Mammary epithelial cell (primary cell): ENCODE measurements at regions of chr2 and their contacts with region 1.

Region 1: DNA sequence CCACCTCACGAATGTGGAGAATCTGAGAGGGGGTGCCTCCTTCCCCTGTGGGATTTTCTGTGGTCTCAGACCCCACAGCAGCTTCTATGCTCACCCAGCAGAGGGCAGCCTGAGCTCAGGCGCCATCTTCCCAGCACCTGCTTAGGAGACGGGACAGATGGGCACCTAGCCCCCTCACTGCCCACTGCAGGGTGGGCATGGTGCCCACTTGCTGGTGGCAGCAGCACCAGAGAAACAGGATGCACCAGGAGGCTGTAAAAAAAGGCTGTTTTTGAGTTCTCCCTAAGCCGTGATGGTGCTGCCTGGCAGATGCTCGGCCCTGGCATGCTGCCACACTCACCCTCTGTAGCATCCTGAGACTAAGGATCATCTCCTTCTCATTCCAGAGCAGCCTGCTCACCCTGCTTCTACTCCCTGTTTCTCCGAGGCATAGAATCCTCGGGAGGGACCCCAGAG is 19.1 kb upstream of the SLC20A1 start:
- DNase-seq: no peak
- H3K4me3 ChIP-seq: peak overlapping the region in 2 of 3 experiments; percentile 28 to 33
- H3K27ac ChIP-seq: peak overlapping the region; percentile 98
- H3K4me1 ChIP-seq: peaks cover 93% of the 10 kb centered on the region
- H3K27me3 ChIP-seq: no peaks in the 10 kb centered on the region
- CTCF ChIP-seq: peak; percentile 78 to 95

Region 2: GRCh38 chr2:112109278-112109677 is 517.4 kb before region 1 on chr2:
- CTCF ChIA-PET with region 1: interaction called, 12 read pairs
- dilution Hi-C with region 1: no loop called
- in situ Hi-C with region 1: no loop called
- intact Hi-C with region 1: no loop called
- DNase-seq: no peak
- H3K4me3 ChIP-seq: no peak overlapping the region
- H3K27ac ChIP-seq: no peak overlapping the region
- H3K4me1 ChIP-seq: no peaks in the 10 kb centered on the region
- H3K27me3 ChIP-seq: no peaks in the 10 kb centered on the region
- CTCF ChIP-seq: no peak

Region 3: GRCh38 chr2:112645310-112646101 is 18.9 kb after region 1 on chr2 and contains the start of gene SLC20A1:
- CTCF ChIA-PET with region 1: interaction called, 6 read pairs
- dilution Hi-C with region 1: no loop called
- in situ Hi-C with region 1: no loop called
- intact Hi-C with region 1: loop called (anchors 1 kb)
- DNase-seq: peak; percentile 96
- H3K4me3 ChIP-seq: peak within 1 kb of the TSS; percentile 84 to 93 (median 85)
- H3K27ac ChIP-seq: peak within 1 kb of the TSS; percentile 94
- H3K4me1 ChIP-seq: peaks cover 51% of the 10 kb centered on the region
- H3K27me3 ChIP-seq: no peaks in the 10 kb centered on the region
- CTCF ChIP-seq: peak; percentile 21 to 40
- total RNA-seq, gene SLC20A1: 227 to 533 TPM

Region 4: GRCh38 chr2:112674229-112674628 is 47.6 kb after region 1 on chr2:
- CTCF ChIA-PET with region 1: no interaction called
- dilution Hi-C with region 1: no loop called
- in situ Hi-C with region 1: no loop called
- intact Hi-C with region 1: no loop called
- DNase-seq: no peak
- H3K4me3 ChIP-seq: no peak overlapping the region
- H3K27ac ChIP-seq: no peak overlapping the region
- H3K4me1 ChIP-seq: peaks cover 2% of the 10 kb centered on the region
- H3K27me3 ChIP-seq: no peaks in the 10 kb centered on the region
- CTCF ChIP-seq: no peak

Region 5: GRCh38 chr2:112692496-112692911 is 65.9 kb after region 1 on chr2:
- CTCF ChIA-PET with region 1: no interaction called
- dilution Hi-C with region 1: no loop called
- in situ Hi-C with region 1: no loop called
- intact Hi-C with region 1: loop called (anchors 1 kb)
- DNase-seq: peak; percentile 100
- H3K4me3 ChIP-seq: no peak overlapping the region
- H3K27ac ChIP-seq: peak overlapping the region; percentile 97
- H3K4me1 ChIP-seq: peaks cover 34% of the 10 kb centered on the region
- H3K27me3 ChIP-seq: no peaks in the 10 kb centered on the region
- CTCF ChIP-seq: no peak

Region 6: DNA sequence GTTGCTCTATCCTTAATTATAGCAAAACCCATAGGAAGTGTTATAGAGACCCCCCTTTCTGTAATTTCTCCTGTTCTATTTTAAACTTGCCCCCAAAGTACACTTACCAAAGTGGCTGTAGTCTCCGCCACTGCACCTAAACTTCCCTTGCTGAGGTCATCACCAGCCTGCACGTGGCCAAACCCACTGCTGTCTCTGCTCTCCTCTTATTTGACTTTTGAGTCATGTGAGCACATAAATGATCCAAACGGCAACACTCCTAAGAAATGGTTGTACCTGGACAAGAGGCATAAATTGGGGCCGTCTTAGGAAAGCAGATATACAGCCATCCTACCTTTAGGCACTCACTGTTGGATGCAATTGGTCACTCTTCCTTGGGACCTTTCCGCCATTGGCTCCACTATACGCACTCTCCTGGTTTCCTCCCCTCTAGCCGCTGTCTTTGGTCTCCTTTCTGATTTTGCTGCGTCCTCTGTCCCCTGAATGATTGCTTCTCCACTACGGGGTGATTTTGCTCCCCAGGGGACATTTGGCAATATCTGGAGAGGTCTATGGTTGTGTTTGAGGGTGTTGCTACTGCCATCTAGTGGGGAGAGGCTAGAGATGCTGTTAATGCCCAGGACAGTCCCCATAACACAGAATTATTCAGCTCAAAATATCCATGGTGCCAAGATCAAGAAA is 331.9 kb after region 1 on chr2:
- CTCF ChIA-PET with region 1: no interaction called
- dilution Hi-C with region 1: no loop called
- in situ Hi-C with region 1: no loop called
- intact Hi-C with region 1: loop called (anchors 10 kb)
- DNase-seq: peak; percentile 53
- H3K4me3 ChIP-seq: no peak overlapping the region
- H3K27ac ChIP-seq: no peak overlapping the region
- H3K4me1 ChIP-seq: peaks cover 13% of the 10 kb centered on the region
- H3K27me3 ChIP-seq: no peaks in the 10 kb centered on the region
- CTCF ChIP-seq: peak; percentile 86 to 92